Colonic mucosa (tissue), 4 donors: ENCODE measurements at regions of chr10 and their contacts with region 1.

Region 1: GRCh38 chr10:81081887-81082620 is 544.4 kb downstream of the SH2D4B start:
- DNase-seq: no peak
- H3K4me3 ChIP-seq: no peak overlapping the region
- H3K27ac ChIP-seq: no peak overlapping the region
- H3K4me1 ChIP-seq: no peaks in the 10 kb centered on the region
- H3K27me3 ChIP-seq: no peaks in the 10 kb centered on the region
- CTCF ChIP-seq: no peak

Region 2: GRCh38 chr10:81179805-81180452 is 97.9 kb after region 1 on chr10:
- intact Hi-C with region 1: loop called (anchors 5 kb)
- DNase-seq: peak; percentile 33
- H3K4me3 ChIP-seq: no peak overlapping the region
- H3K27ac ChIP-seq: no peak overlapping the region
- H3K4me1 ChIP-seq: no peaks in the 10 kb centered on the region
- H3K27me3 ChIP-seq: no peaks in the 10 kb centered on the region
- CTCF ChIP-seq: peak; percentile 27

Region 3: DNA sequence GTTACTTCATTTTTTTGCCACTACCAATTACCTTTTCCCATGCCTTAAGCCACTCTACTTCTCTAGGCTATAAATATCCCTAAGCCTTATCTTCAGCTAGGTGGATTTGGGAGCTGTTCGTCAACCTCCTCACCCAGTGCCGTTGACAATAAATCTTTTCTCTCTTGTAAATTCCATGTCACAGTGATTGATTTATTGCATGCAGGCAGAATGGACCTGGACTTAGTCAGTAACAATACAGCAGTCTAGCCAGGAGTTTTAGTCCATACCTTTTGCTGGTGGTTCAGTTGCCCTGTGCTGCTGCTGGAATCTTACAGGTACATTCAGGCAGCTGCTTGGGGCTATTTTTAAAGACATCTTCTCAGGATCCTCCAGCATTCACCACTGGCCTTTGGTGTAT is 442.4 kb after region 1 on chr10:
- intact Hi-C with region 1: no loop called
- DNase-seq: no peak
- H3K4me3 ChIP-seq: no peak overlapping the region
- H3K27ac ChIP-seq: no peak overlapping the region
- H3K4me1 ChIP-seq: no peaks in the 10 kb centered on the region
- H3K27me3 ChIP-seq: no peaks in the 10 kb centered on the region
- CTCF ChIP-seq: no peak